HCT116 (cell line): ENCODE measurements at regions of chr5 and their contacts with region 1.

Region 1: DNA sequence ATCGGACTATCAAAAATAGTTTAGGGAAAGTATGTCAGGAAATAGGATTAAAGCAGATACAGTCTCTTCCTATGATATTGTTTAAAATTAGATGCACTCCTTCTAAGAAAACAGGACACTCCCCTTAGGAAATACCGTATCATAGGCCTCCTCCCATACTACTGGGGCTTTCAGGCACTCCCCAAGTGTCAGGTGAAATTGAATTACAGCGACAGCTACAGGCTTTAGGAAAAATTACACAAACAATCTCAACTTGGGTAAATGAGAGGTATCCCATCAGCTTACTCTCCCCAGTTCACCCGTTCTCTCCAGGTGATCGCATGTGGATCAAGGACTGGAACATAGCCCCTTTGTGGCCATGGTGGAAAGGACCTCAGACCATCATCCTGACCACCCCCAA is 110.4 kb upstream of the EPB41L4A start:
- DNase-seq: peak; percentile 33
- ATAC-seq: peak; percentile 93
- H3K4me3 ChIP-seq: no peak overlapping the region
- H3K27ac ChIP-seq: no peak overlapping the region
- H3K4me1 ChIP-seq: peaks cover 0 to 8% of the 10 kb centered on the region in 2 experiments; a peak in 1 of 4 replicates
- H3K27me3 ChIP-seq: no peaks in the 10 kb centered on the region
- CTCF ChIP-seq: peak; percentile 25 to 55 (median 38); a peak in 5 of 6 replicates
- POLR2A ChIP-seq: no peak
- RAD21 ChIP-seq: peak; percentile 50

Region 2: GRCh38 chr5:112174959-112175594 is 354.4 kb before region 1 on chr5:
- CTCF ChIA-PET with region 1: interaction called, 5 read pairs
- POLR2A ChIA-PET with region 1: no interaction called
- RAD21 ChIA-PET with region 1: no interaction called
- intact Hi-C with region 1: loop called (anchors 2 kb)
- DNase-seq: peak; percentile 61
- ATAC-seq: peak; percentile 89
- H3K4me3 ChIP-seq: peak overlapping the region in 1 of 2 experiments; percentile 22; a peak in 1 of 4 replicates
- H3K27ac ChIP-seq: no peak overlapping the region
- H3K4me1 ChIP-seq: peaks cover 2 to 3% of the 10 kb centered on the region in 2 experiments; a peak in 2 of 4 replicates
- H3K27me3 ChIP-seq: no peaks in the 10 kb centered on the region
- CTCF ChIP-seq: peak; percentile 55 to 85 (median 78)
- POLR2A ChIP-seq: no peak
- RAD21 ChIP-seq: peak; percentile 83

Region 3: DNA sequence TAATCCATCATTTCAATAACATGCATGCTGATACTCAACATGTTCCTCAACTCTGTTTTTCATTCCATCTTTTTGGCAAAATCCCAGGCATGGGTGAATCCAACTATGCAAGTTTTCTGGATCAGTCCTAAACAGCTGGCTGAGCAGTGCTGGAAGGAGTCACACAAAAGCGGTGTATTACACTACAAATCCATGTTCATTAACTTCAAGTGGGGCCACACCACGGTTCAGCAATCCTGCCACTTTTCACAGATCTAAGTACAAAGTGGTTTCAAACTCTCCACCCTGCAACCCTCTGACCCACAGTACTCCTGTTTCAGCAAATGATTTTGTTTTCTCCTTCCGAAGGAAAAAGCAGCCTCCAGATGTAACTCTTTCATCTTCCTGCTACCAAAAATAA is 332.9 kb before region 1 on chr5:
- CTCF ChIA-PET with region 1: no interaction called
- POLR2A ChIA-PET with region 1: no interaction called
- RAD21 ChIA-PET with region 1: no interaction called
- intact Hi-C with region 1: no loop called
- DNase-seq: no peak
- ATAC-seq: no peak
- H3K4me3 ChIP-seq: no peak overlapping the region
- H3K27ac ChIP-seq: no peak overlapping the region
- H3K4me1 ChIP-seq: no peaks in the 10 kb centered on the region
- H3K27me3 ChIP-seq: peaks cover 13% of the 10 kb centered on the region; the same call in 1 of the 2 replicates
- CTCF ChIP-seq: no peak
- POLR2A ChIP-seq: no peak
- RAD21 ChIP-seq: no peak

Region 4: DNA sequence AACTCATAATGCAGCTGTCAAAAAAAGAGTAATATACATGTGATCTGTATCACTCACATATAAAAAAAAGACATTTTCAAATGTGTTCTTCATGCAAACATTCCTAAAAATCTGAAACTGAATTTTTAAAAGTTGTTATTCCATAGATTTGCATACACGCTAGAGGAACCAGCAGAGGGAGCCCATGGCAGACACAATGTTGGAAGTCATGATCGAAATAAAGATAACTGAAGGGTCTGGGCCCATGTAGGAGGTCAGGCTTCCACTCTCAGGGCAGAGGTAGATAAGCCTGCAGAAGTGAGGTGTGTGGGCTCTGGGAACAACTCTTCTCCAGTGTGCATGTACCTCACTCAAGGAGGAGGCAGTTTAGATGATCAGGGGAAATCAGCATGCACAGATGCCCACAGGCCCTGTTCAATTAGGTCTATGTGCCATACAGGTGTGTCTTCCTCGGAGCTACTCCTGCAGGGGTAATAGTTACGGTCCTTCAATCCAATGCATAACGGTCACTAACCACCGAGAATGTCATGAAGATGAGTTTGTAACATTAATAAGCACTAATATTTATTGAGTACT is 319.0 kb before region 1 on chr5:
- CTCF ChIA-PET with region 1: no interaction called
- POLR2A ChIA-PET with region 1: no interaction called
- RAD21 ChIA-PET with region 1: no interaction called
- intact Hi-C with region 1: loop called (anchors 10 kb)
- DNase-seq: peak; percentile 16
- ATAC-seq: peak; percentile 82
- H3K4me3 ChIP-seq: no peak overlapping the region
- H3K27ac ChIP-seq: no peak overlapping the region
- H3K4me1 ChIP-seq: no peaks in the 10 kb centered on the region
- H3K27me3 ChIP-seq: no peaks in the 10 kb centered on the region
- CTCF ChIP-seq: peak; percentile 69 to 77 (median 71); a peak in 5 of 6 replicates
- POLR2A ChIP-seq: no peak
- RAD21 ChIP-seq: peak; percentile 83